ENCODE measurements at regions of chr19 and their contacts with region 1.

Region 1: GRCh38 chr19:39390755-39391592 is at the starts of genes MED29 and PAF1:
- DNase-seq: peak; percentile 99
- H3K4me3 ChIP-seq: peak within 1 kb of the TSS; percentile 86
- H3K27ac ChIP-seq: peak within 1 kb of the TSS; percentile 84
- H3K4me1 ChIP-seq: peaks cover 24% of the 10 kb centered on the region
- CTCF ChIP-seq: peak; percentile 57; the same call in 1 of the 2 replicates
- total RNA-seq, gene MED29: 15.7 and 28.3 TPM in 2 replicates
- total RNA-seq, gene PAF1: 33.1 and 35.4 TPM in 2 replicates

Region 2: DNA sequence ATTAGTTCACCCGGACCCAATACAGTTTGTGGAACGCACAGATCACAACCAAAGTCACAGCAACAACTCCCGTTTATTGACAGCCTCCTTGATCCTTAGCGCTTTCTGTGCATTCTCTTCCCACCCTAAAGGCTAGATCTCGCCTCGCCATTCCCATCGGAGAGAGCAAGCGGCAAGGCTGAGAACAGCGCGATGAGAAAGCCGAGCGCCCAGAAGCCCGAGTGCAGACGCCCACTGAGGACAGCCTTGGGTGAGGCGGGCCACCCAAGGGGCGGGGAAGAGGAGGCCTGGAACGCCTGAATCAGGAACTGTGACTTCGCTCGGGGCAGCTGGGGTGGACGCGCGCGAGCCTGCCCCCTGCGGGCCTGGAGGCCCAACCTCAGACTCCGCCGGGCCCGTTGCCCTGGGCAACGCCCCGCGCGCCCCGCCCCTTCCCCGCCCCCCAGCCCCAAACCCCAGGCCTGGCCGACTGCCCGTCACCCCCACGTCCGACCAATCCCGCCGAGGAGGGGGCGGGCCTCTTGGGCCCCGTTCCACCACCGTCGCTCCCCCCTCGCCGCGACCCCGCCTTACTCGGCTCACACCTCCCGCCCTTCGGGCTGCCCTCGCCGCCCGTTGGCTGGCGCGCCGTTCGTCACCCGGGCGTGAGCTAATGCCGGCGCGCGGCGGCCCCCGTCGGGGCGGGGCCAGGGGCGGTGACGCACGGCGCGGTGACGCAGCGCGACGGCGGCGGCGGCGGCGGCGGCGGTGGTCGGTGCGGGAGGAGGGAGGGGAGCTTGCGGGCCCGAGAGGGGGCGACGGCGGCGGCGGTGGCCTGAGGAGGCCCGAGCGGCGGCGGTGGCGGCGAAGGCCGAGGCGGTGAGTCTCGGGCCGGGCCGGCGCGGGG is 49.0 kb before region 1 on chr19 and contains the start of gene SAMD4B:
- CTCF ChIA-PET with region 1: no interaction called
- POLR2A ChIA-PET with region 1: interaction called, 6 read pairs
- intact Hi-C with region 1: loop called (anchors 1 kb)
- DNase-seq: peak; percentile 99
- H3K4me3 ChIP-seq: peak within 1 kb of the TSS; percentile 96
- H3K27ac ChIP-seq: peak within 1 kb of the TSS; percentile 71
- H3K4me1 ChIP-seq: peaks cover 48% of the 10 kb centered on the region
- CTCF ChIP-seq: peak; percentile 68
- total RNA-seq, gene SAMD4B: 46.2 and 59.4 TPM in 2 replicates